CD14-positive monocyte (primary cell): ENCODE measurements at regions of chr7 and their contacts with region 1.

Region 1: DNA sequence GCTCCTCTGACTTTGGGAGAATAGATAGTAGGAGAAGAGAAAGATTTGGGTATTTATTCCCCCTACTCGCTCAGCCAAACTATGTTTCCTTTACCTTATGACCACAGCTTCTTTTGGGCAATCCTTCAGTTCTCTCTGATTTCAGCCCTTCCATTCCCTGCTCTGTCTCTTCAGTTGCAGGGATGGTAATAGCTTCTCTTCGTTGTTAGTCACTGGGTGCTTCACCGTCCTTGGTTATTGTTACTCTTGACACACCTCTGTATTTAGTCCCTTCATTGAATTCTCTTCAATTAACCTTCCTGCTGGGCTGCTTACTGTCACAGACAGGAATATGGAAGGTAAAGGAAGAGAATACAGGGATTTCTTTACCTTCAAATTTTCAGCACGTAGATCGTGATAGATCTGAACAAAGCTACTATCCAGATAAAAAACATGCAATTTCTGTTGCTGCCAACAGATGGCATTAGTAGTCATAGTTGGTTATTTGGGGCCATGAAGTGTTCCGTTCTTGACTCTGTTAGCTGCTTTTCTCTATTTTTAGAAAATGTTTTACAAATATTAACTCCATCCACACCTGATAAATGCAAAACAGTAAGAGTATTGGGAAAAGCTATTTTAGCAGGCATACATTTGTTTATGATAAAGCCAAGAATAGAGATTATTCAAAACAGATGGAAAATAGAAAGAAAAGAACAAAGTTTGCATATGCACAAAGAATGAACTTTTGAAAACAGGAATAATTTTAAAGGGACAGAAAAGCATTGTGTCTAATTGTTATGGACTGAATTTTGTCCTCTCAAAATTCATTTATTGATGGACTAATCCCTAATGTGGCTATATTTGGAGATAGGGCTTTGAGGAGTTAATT is 14.0 kb upstream of the PTTG1IP2 start:
- DNase-seq: peak; percentile 21 to 55 (median 41)
- H3K4me3 ChIP-seq: no peak overlapping the region
- H3K4me3 Mint-ChIP-seq: peak overlapping the region in 1 of 2 donors; percentile 77
- H3K27ac ChIP-seq: no peak overlapping the region
- H3K27ac Mint-ChIP-seq: no peak overlapping the region
- H3K4me1 ChIP-seq: peaks cover 0 to 6% of the 10 kb centered on the region in 2 donors
- H3K4me1 Mint-ChIP-seq: peaks cover 5% of the 10 kb centered on the region
- H3K27me3 ChIP-seq: no peaks in the 10 kb centered on the region
- H3K27me3 Mint-ChIP-seq: peaks cover 3 to 11% (median 10%) of the 10 kb centered on the region in 3 donors
- CTCF ChIP-seq: peak; percentile 84

Region 2: GRCh38 chr7:90518630-90519029 is 63.2 kb after region 1 on chr7:
- intact Hi-C with region 1: loop called in 1 of 2 experiments (anchors 2 kb)
- DNase-seq: no peak
- H3K4me3 ChIP-seq: no peak overlapping the region
- H3K4me3 Mint-ChIP-seq: no peak overlapping the region
- H3K27ac ChIP-seq: no peak overlapping the region
- H3K27ac Mint-ChIP-seq: no peak overlapping the region
- H3K4me1 ChIP-seq: no peaks in the 10 kb centered on the region
- H3K4me1 Mint-ChIP-seq: no peaks in the 10 kb centered on the region
- H3K27me3 ChIP-seq: peaks cover 0 to 3% of the 10 kb centered on the region in 2 donors
- H3K27me3 Mint-ChIP-seq: peaks cover 0 to 6% (median 6%) of the 10 kb centered on the region in 3 donors
- CTCF ChIP-seq: no peak

Region 3: DNA sequence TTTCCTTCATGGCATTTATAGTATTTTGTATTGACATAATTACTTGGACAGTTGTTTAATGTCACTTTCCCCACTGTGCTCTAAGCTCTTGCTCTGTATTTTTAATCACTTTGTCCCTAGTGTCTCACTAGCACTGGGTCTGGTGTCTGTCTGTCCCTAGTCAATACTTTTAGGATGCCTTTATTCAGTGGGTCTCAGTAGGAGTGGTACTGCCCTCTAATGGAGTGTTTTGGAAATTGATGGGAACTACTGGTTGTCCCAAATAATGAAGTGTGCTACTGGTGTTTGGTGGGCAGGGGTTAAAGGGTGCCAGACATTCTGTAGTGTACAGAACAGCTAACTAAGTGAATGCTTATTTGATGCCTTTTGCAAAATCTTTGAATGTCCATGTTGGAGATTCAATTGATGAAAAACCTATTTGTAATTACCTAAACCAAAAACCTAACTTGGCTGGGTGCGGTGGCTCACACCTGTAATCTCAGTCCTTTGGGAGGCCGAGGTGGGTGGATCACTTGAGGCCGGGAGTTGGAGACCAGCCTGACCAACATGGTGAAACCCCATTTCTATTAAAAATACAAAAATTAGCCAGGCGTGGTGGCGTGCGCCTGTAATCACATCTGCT is 174.0 kb after region 1 on chr7:
- intact Hi-C with region 1: loop called (anchors 5 kb)
- DNase-seq: peak; percentile 59 to 83 (median 71)
- H3K4me3 ChIP-seq: no peak overlapping the region
- H3K4me3 Mint-ChIP-seq: no peak overlapping the region
- H3K27ac ChIP-seq: no peak overlapping the region
- H3K27ac Mint-ChIP-seq: peak overlapping the region in 3 of 7 donors; percentile 1 to 35 (median 13)
- H3K4me1 ChIP-seq: peaks cover 4 to 7% of the 10 kb centered on the region in 2 donors
- H3K4me1 Mint-ChIP-seq: peaks cover 8% of the 10 kb centered on the region
- H3K27me3 ChIP-seq: no peaks in the 10 kb centered on the region
- H3K27me3 Mint-ChIP-seq: peaks cover 0 to under 1% (median 0%) of the 10 kb centered on the region in 3 donors
- CTCF ChIP-seq: peak; percentile 82

Region 4: GRCh38 chr7:91034459-91035368 is 579.3 kb after region 1 on chr7:
- intact Hi-C with region 1: loop called in 1 of 2 experiments (anchors 10 kb)
- DNase-seq: no peak
- H3K4me3 ChIP-seq: no peak overlapping the region
- H3K4me3 Mint-ChIP-seq: no peak overlapping the region
- H3K27ac ChIP-seq: no peak overlapping the region
- H3K27ac Mint-ChIP-seq: no peak overlapping the region
- H3K4me1 ChIP-seq: no peaks in the 10 kb centered on the region
- H3K4me1 Mint-ChIP-seq: no peaks in the 10 kb centered on the region
- H3K27me3 ChIP-seq: no peaks in the 10 kb centered on the region
- H3K27me3 Mint-ChIP-seq: peaks cover 0 to 1% (median 0%) of the 10 kb centered on the region in 3 donors
- CTCF ChIP-seq: peak; percentile 48